Activated naive CD4-positive, alpha-beta T cell treated with anti-CD3 and anti-CD28 coated beads for 36 hours (primary cell): ENCODE measurements at regions of chr15 and their contacts with region 1.

Region 1: GRCh38 chr15:65862682-65863081 is 6.6 kb upstream of the RAB11A start:
- DNase-seq: peak; percentile 85
- H3K4me3 Mint-ChIP-seq: no peak overlapping the region
- H3K27ac Mint-ChIP-seq: no peak overlapping the region
- H3K4me1 Mint-ChIP-seq: peaks cover 12% of the 10 kb centered on the region
- H3K27me3 Mint-ChIP-seq: no peaks in the 10 kb centered on the region

Region 2: DNA sequence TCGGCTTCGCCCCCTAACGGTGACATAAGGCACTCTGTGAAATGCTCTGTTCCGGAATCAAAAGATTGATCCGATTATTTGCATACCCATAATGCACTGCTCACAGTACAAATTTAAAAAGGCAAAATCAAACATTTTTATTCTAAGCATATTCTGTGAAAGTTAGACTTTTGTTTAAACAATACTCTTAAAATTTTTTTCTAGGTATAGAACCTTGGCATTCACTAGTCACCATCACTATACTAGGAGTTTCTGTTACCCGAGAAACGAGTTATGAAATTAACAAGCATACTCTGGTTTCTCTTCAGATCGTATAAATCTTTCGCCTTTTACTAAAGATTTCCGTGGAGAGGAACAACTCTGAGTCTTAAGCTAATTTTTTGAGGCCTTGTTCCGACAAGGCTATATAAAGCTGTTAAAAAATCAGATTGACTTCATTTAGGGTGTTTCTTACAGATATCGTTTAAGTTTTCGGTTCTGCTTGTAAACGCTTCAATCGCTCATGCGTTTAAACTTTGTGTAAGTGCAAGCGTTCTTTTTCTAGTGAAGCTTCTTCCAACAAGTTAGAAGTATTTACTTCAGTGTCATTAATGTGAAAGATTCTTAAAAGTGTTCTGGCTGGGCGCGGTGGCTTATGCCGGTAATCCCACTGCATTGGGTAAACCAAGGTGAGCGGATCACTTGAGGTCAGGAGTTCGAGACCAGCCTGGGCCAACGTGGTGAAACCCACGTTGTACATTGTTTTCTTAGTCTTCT is 558.1 kb before region 1 on chr15 and contains the start of gene RNU5B-1:
- CTCF ChIA-PET with region 1: no interaction called
- intact Hi-C with region 1: no loop called
- DNase-seq: peak; percentile 86
- H3K4me3 Mint-ChIP-seq: peak within 1 kb of the TSS; percentile 89
- H3K27ac Mint-ChIP-seq: peak within 1 kb of the TSS; percentile 97
- H3K4me1 Mint-ChIP-seq: peaks cover 24% of the 10 kb centered on the region
- H3K27me3 Mint-ChIP-seq: peaks cover 4% of the 10 kb centered on the region
- total RNA-seq, gene RNU5B-1: not detected

Region 3: DNA sequence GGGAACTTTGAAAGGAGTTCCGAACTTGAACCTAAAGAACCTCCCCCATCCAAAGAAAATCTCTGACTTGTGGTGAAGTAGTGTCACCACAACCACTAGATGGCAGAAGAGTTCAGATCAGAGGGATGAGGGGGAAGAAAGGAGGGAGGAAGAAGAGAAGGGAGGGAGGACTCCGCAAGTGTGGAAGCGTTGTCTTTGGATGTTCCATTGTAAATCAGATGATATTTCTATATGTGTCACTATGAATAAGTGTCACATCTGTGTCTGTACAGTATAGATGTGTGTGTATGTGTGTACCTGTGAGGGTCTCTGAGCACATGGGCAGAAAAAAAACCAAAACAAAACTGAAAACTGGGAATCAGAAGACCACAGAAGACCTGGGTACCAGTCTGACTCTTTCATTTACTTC is 224.0 kb before region 1 on chr15:
- CTCF ChIA-PET with region 1: interaction called, 36 read pairs
- intact Hi-C with region 1: loop called (anchors 1 kb)
- DNase-seq: peak; percentile 53
- H3K4me3 Mint-ChIP-seq: no peak overlapping the region
- H3K27ac Mint-ChIP-seq: no peak overlapping the region
- H3K4me1 Mint-ChIP-seq: peaks cover 8% of the 10 kb centered on the region
- H3K27me3 Mint-ChIP-seq: no peaks in the 10 kb centered on the region

Region 4: DNA sequence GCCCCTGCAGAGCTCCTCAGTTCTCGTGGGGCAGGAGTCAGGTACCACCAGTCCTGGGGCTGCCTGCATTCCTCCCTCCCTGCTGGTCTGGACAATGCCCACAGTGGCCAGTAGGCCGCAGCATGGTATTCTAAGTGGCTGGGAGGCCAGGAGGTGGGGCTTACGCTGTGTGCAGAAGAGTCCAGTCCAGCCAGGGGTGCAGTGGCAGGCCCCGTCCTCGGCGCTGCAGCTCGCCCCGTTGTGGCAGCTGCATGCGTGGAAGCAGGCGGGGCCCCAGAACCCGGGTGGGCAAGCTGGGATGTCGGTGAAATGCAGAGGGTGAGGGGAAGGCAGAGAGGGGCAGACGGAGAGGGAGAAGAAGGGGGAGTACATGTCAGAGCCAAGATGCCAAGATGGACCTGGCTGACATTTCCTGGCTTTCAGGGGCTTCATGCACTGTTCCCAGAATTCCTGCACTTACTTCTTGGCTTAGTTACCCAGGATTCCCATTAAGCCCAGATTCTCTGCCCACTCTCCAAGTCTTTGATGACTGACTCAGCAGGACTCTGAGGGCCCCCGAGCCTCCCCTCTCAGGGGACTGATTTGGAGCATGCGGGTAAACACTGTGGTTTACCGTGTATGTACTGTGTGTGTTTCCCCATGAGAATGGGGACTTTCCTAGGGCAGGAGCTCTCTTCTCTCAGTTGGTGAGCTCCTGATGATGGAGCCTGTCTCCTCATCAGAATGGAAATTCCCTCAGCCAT is 54.2 kb after region 1 on chr15:
- CTCF ChIA-PET with region 1: interaction called, 6 read pairs
- intact Hi-C with region 1: loop called (anchors 2 kb)
- DNase-seq: peak; percentile 81
- H3K4me3 Mint-ChIP-seq: no peak overlapping the region
- H3K27ac Mint-ChIP-seq: peak overlapping the region; percentile 54
- H3K4me1 Mint-ChIP-seq: peaks cover 30% of the 10 kb centered on the region
- H3K27me3 Mint-ChIP-seq: no peaks in the 10 kb centered on the region

Region 5: GRCh38 chr15:65929573-65929972 is 66.9 kb after region 1 on chr15:
- CTCF ChIA-PET with region 1: interaction called, 3 read pairs
- intact Hi-C with region 1: loop called (anchors 2 kb)
- DNase-seq: no peak
- H3K4me3 Mint-ChIP-seq: no peak overlapping the region
- H3K27ac Mint-ChIP-seq: no peak overlapping the region
- H3K4me1 Mint-ChIP-seq: no peaks in the 10 kb centered on the region
- H3K27me3 Mint-ChIP-seq: no peaks in the 10 kb centered on the region

Region 6: DNA sequence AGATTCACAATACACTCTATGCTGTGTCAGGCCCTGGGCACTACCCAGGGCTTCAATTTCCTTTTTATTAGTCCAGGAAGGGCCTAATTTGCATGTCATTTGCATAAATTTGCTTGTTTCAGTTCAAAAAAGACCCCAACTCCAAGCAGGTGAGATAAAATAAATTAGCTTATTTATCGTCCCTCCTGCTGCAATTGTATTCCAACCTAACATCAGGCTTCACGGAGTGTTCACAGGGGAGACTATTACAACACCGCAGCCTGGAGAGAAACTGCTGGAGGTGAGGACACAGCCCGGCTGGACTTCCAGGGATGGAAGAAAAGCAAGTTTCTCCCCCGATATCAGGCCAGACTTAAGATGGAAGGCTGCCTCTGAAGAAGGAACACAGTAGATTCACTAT is 328.1 kb after region 1 on chr15:
- CTCF ChIA-PET with region 1: no interaction called
- intact Hi-C with region 1: loop called (anchors 1 kb)
- DNase-seq: no peak
- H3K4me3 Mint-ChIP-seq: no peak overlapping the region
- H3K27ac Mint-ChIP-seq: no peak overlapping the region
- H3K4me1 Mint-ChIP-seq: no peaks in the 10 kb centered on the region
- H3K27me3 Mint-ChIP-seq: peaks cover 1% of the 10 kb centered on the region